T-cell (primary cell): ENCODE measurements at regions of chr5 and their contacts with region 1.

Region 1: DNA sequence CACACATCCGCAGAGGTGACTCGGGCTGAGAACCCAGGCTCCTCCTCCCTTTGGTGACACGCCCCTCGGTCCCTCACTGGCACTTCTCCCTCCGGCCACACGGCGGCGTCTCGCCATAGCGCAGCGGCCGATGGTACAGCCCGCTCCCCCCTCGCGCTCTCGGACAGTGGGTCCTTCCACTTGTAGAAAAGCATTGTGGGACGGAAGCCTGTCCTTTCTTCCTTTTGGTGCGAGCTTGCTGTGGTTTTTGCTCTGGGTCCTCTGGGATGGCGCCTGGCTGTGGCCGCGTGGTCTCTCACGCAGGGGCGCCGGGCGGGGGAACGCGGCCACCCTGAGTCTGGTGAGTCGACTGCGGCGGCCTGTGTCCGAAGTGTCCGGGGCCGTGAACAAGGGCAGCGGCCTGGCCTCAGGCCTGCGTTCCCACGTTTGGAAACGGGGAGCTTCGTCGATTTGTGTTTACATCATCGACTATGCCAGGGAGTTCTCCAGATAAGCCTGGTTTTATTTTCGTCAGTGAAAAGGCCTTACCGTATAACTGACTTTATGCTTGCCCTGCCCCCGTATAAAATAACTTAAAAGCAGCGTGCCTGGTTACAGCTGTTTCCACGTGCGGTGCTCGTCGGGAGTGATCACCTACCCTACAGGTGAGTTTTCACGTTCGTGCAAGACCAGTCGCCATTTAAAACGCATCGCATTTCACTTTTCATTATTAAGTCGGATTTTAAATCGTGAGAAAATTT is 258.3 kb downstream of the EPB41L4A start:
- DNase-seq: peak; percentile 74 to 95 (median 88)
- ATAC-seq: peak; percentile 88 to 99 (median 96)
- H3K4me3 ChIP-seq: peak overlapping the region; percentile 92 to 95
- H3K4me3 Mint-ChIP-seq: peak overlapping the region; percentile 89 to 94 (median 94)
- H3K27ac ChIP-seq: peak overlapping the region; percentile 72
- H3K27ac Mint-ChIP-seq: peak overlapping the region; percentile 74 to 83
- H3K4me1 ChIP-seq: peaks cover 9 to 13% of the 10 kb centered on the region in 2 experiments
- H3K4me1 Mint-ChIP-seq: peaks cover 30 to 38% (median 30%) of the 10 kb centered on the region in 3 donors
- H3K27me3 ChIP-seq: peaks cover 0 to 3% of the 10 kb centered on the region in 2 experiments
- H3K27me3 Mint-ChIP-seq: no peaks in the 10 kb centered on the region

Region 2: GRCh38 chr5:112174959-112175594 is 14.3 kb after region 1 on chr5:
- CTCF ChIA-PET with region 1: interaction called, 4 to 31 read pairs
- POLR2A ChIA-PET with region 1: interaction called in 1 of 2 experiments, 15 read pairs
- DNase-seq: peak in 19 of 35 experiments; percentile 3 to 66 (median 11)
- ATAC-seq: peak; percentile 37 to 62 (median 45)
- H3K4me3 ChIP-seq: no peak overlapping the region
- H3K4me3 Mint-ChIP-seq: no peak overlapping the region
- H3K27ac ChIP-seq: no peak overlapping the region
- H3K27ac Mint-ChIP-seq: no peak overlapping the region
- H3K4me1 ChIP-seq: peaks cover 3 to 4% of the 10 kb centered on the region in 2 experiments
- H3K4me1 Mint-ChIP-seq: peaks cover 0 to 6% (median 4%) of the 10 kb centered on the region in 3 donors
- H3K27me3 ChIP-seq: no peaks in the 10 kb centered on the region
- H3K27me3 Mint-ChIP-seq: peaks cover 6 to 18% of the 10 kb centered on the region in 2 donors

Region 3: DNA sequence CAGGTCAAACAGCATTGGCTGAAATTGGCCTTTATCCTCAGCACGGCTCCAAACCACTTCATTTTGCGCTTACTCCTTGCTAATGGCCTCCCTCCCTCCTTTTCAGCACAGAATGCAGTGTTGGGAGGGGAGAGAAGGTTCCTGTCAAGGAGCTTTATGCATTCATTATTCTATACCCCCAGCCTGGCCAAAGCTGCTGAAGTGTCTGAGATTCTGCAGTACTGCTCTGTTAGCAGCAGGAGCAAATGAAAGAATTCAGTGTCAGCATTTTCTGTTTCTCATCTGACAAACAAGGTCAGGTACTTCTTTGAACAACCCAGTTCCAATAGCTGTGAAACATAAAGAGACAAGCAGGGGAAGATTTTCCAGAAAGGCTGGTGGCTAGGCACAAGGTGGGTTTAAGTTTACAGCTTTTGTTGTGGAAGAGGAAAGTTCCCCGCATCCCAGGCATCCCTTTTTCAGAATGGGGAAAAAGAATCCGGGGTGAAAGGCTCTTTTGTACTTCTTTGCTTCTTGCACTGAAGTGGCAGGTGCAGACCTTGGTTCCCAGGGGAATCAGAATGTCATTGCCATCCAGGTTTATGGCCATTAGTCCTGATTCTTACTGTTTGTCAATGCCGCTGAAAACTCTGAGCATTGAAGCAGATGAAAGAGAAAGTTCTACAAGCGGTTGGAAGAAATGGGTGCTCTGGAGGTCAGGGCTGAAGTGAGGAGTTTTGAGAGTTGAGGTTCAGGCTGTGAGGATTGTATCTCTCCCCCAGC is 467.6 kb after region 1 on chr5:
- CTCF ChIA-PET with region 1: no interaction called
- POLR2A ChIA-PET with region 1: no interaction called
- DNase-seq: no peak
- ATAC-seq: no peak
- H3K4me3 ChIP-seq: no peak overlapping the region
- H3K4me3 Mint-ChIP-seq: no peak overlapping the region
- H3K27ac ChIP-seq: no peak overlapping the region
- H3K27ac Mint-ChIP-seq: no peak overlapping the region
- H3K4me1 ChIP-seq: no peaks in the 10 kb centered on the region
- H3K4me1 Mint-ChIP-seq: no peaks in the 10 kb centered on the region
- H3K27me3 ChIP-seq: peaks cover 0 to 3% of the 10 kb centered on the region in 2 experiments
- H3K27me3 Mint-ChIP-seq: peaks cover 38 to 68% of the 10 kb centered on the region in 2 donors